Tibial artery (tissue), 4 donors: ENCODE measurements at regions of chr6 and their contacts with region 1.

Region 1: GRCh38 chr6:56364827-56365313 is 117.5 kb upstream of the COL21A1 start:
- DNase-seq: no peak
- H3K4me3 ChIP-seq: no peak overlapping the region
- H3K27ac ChIP-seq: peak overlapping the region in 1 of 2 donors; percentile 33
- H3K4me1 ChIP-seq: peaks cover 0 to 33% (median 15%) of the 10 kb centered on the region in 4 donors
- H3K27me3 ChIP-seq: no peaks in the 10 kb centered on the region
- CTCF ChIP-seq: no peak

Region 2: DNA sequence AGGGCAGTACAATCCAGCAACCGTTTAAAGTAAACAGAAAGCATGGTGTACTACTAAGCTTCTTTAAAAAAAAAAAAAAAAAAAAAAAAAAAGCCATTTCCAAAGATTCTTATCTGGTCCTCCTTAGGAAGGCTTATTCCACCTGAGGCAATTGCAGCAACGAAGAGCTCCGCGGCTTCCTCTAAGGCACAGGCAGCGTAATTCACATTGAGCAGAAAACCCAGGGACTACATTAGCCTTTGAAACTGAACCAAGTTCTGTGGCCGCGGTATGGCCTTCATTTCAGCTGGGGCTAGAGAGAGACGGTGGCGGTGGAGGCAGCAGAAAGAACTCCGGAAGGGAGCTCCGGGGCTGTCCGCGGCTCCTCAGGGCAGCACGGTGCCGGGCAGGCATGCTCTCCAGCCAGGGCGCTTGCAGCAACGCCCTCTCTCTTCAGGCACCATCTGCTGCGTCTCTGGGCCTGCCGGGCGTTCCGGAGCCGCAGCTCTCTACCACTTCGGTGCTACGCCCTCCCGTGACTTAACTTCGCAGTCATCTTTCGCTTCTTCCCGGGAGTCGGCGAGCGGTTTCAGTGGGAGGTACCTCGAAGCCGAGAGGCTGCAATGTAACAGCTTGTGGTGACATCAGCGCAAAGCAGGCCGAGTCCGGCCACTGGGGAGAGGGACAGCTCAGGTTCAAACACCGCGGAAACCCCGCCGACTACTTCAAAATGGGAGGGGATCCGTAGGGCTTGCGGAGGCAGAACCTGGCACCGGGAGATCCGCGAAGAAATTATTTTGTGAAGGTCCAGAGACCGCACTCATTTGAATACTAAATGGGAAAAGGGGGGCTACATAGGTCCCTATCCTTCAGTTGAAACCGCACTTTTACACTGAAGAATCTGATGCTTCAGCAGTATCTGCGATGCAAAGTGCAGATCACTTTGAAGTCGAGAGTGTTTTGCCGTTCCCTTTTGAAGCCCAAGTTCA is 177.8 kb after region 1 on chr6:
- intact Hi-C with region 1: loop called (anchors 10 kb)
- DNase-seq: peak; percentile 97 to 98
- H3K4me3 ChIP-seq: peak overlapping the region; percentile 71 to 78
- H3K27ac ChIP-seq: peak overlapping the region; percentile 92 to 93
- H3K4me1 ChIP-seq: peaks cover 0 to 47% (median 7%) of the 10 kb centered on the region in 4 donors
- H3K27me3 ChIP-seq: no peaks in the 10 kb centered on the region
- CTCF ChIP-seq: peak in 1 of 2 experiments; percentile 40

Region 3: DNA sequence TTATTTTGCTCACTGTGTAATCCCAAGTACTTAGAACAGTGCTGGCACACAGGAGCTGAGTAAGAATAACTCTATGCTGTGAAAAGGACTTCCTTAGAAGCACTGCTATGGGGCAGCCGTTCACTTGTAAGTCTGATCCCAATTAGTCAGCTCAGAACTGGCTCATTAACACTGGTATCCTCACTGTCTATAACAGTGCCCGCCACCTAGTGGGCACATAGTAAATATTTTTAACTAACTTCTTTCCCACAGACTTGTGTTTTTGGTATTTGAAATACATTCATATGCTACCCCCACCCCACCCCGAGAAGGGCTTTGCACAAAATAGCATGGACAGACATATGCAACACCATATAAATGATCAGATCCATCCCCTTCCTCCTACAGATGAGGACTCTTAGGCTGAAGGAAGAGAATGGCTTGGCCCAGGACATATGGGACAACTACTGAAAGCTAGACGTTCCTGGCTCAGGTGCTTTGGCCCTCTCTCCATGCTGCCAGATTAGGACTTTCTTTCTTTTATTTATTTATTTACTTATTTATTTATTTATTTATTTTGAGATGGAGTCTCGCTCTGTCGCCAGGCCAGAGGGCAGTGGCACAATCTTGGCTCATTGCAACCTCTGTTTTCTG is 230.7 kb after region 1 on chr6:
- intact Hi-C with region 1: loop called (anchors 5 kb)
- DNase-seq: no peak
- H3K4me3 ChIP-seq: no peak overlapping the region
- H3K27ac ChIP-seq: peak overlapping the region in 1 of 2 donors; percentile 10
- H3K4me1 ChIP-seq: no peaks in the 10 kb centered on the region
- H3K27me3 ChIP-seq: no peaks in the 10 kb centered on the region
- CTCF ChIP-seq: peak; percentile 47 to 61

Region 4: DNA sequence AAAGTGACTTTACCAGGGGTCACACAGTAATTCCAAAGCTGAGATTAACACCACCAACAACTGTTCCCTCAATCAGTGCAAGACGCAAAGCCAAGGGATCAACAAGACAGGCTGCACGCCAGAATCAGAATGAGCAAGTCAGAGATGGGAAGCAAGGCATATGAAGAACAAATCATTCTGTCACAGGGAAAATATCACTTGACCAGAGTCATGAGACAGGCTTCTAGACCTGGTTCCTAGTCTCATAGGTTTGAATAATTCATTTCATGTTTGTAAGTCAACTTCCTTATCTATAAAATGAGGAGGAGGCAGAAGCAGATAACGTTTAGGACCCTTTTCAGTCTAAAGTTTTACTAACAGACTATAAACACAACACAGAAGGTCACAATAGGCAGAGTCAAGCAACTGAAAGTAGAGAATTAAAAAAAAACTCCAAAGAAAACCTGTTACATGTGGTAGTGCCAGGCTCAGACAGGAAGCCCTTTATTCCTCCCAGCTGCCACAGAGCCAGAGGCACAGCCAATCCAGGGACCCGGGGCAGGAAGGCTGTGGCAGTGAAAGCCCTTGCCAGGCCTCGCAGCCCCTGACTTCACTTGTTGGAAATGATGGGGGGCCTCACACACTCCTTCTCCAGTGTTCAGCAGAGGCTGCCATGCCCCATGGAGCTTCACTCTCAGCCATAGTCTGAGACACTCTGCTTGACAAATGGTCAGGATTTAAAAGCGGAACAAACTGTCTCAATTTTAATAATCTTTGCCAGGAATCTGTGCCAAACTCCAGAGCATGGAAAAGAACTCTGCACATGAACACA is 307.0 kb after region 1 on chr6:
- intact Hi-C with region 1: loop called (anchors 10 kb)
- DNase-seq: peak; percentile 58 to 68
- H3K4me3 ChIP-seq: peak overlapping the region in 1 of 2 donors; percentile 11
- H3K27ac ChIP-seq: peak overlapping the region; percentile 76 to 81
- H3K4me1 ChIP-seq: peaks cover 0 to 47% (median 23%) of the 10 kb centered on the region in 4 donors
- H3K27me3 ChIP-seq: no peaks in the 10 kb centered on the region
- CTCF ChIP-seq: no peak

Region 5: GRCh38 chr6:56851541-56852259 is 486.8 kb after region 1 on chr6:
- intact Hi-C with region 1: loop called (anchors 10 kb)
- DNase-seq: peak in 1 of 2 donors; percentile 42
- H3K4me3 ChIP-seq: peak overlapping the region; percentile 55 to 72
- H3K27ac ChIP-seq: peak overlapping the region; percentile 47 to 64
- H3K4me1 ChIP-seq: peaks cover 0 to 20% (median 5%) of the 10 kb centered on the region in 4 donors
- H3K27me3 ChIP-seq: no peaks in the 10 kb centered on the region
- CTCF ChIP-seq: peak; percentile 61 to 64